CD4-positive, alpha-beta memory T cell (primary cell): ENCODE measurements at regions of chr2 and their contacts with region 1.

Region 1: DNA sequence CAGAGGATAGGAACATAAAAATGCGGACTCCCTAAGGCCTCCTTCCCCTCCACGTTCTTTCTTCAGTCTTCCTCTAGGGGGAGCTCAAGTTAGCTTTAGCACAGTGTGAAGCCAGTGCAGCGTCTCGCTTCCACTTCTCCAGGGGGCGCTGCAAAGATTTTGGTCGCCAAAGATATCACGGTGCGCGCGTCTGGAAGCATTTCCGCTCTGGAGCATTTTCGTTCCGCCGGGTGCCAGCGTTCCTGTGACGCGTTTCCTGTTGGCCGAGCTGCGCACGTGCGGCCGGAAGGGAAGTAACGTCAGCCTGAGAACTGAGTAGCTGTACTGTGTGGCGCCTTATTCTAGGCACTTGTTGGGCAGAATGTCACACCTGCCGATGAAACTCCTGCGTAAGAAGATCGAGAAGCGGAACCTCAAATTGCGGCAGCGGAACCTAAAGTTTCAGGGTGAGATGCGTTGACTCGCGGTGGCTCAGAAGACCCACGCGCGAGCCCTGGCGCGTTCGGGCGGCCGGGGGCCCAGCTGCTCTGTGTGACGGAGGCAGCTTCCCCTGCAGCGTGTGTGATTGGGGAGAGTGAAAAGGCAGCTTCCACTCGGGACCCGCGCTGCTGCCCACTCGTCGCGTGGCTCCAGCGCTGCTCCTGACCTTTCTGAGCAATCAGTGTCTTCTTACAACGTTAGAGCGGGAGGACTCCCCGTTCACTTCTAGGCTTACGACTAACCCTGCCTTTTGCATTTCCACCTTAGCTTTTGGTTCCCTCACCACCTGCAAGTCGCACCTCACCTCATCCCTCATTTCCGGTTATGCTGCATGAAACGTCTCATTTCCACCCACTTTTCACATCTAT is at the start of gene DDX18:
- DNase-seq: peak; percentile 98 to 99 (median 98)
- H3K4me3 ChIP-seq: peak within 1 kb of the TSS; percentile 77 to 91
- H3K4me3 Mint-ChIP-seq: peak within 1 kb of the TSS; percentile 86 to 99 (median 95)
- H3K27ac ChIP-seq: peak within 1 kb of the TSS; percentile 92
- H3K27ac Mint-ChIP-seq: peak within 1 kb of the TSS; percentile 95 to 100 (median 100)
- H3K4me1 ChIP-seq: peaks cover 35% of the 10 kb centered on the region
- H3K4me1 Mint-ChIP-seq: peaks cover 25 to 50% (median 38%) of the 10 kb centered on the region in 4 donors
- H3K27me3 ChIP-seq: no peaks in the 10 kb centered on the region
- H3K27me3 Mint-ChIP-seq: no peaks in the 10 kb centered on the region
- total RNA-seq, gene DDX18: 105 to 111 TPM

Region 2: DNA sequence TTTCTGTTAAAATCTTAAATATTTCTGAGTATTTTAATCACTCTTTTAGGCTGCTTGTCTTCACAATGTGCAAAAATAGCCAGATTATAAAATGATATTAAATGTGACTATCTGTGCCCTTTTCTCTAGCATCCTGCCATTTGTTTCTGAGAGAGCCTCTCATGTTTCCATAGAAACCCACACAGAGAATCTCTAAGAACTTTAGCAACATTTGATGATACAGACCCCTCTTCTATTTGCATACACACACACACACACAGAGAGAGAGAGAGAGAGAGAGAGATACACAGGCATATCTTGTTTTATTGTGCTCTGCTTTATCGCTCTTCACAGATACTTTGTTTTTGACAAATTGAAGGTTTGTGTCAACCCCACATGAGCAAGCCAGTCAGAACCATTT is 134.7 kb before region 1 on chr2:
- CTCF ChIA-PET with region 1: no interaction called
- POLR2A ChIA-PET with region 1: no interaction called
- intact Hi-C with region 1: no loop called
- DNase-seq: no peak
- H3K4me3 ChIP-seq: no peak overlapping the region
- H3K4me3 Mint-ChIP-seq: no peak overlapping the region
- H3K27ac ChIP-seq: no peak overlapping the region
- H3K27ac Mint-ChIP-seq: no peak overlapping the region
- H3K4me1 ChIP-seq: no peaks in the 10 kb centered on the region
- H3K4me1 Mint-ChIP-seq: no peaks in the 10 kb centered on the region
- H3K27me3 ChIP-seq: no peaks in the 10 kb centered on the region
- H3K27me3 Mint-ChIP-seq: peaks cover 2 to 7% of the 10 kb centered on the region in 2 donors

Region 3: DNA sequence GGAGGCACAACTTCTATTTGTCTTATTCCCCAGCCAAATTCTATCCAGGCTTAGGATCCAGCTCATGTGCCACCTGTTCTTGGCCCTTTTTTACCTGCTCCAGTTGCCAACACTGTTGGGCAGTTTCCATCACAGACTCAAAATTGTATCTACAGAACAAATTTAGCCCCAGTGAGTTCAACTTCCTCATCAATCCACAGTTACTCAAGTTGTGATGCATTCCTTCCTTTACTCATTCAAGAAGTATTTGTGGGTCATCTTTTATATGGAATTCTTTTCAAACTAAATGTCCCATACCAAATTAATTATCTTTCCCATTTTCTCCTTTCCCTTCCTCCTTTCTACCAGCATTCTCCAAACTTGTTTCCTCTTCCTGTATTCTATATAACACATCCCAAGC is 12.8 kb before region 1 on chr2:
- CTCF ChIA-PET with region 1: interaction called, 13 read pairs
- POLR2A ChIA-PET with region 1: interaction called, 12 read pairs
- intact Hi-C with region 1: no loop called
- DNase-seq: no peak
- H3K4me3 ChIP-seq: no peak overlapping the region
- H3K4me3 Mint-ChIP-seq: no peak overlapping the region
- H3K27ac ChIP-seq: no peak overlapping the region
- H3K27ac Mint-ChIP-seq: peak overlapping the region in 1 of 7 donors; percentile 56
- H3K4me1 ChIP-seq: no peaks in the 10 kb centered on the region
- H3K4me1 Mint-ChIP-seq: peaks cover 0 to 10% (median 2%) of the 10 kb centered on the region in 4 donors
- H3K27me3 ChIP-seq: no peaks in the 10 kb centered on the region
- H3K27me3 Mint-ChIP-seq: peaks cover 15 to 19% of the 10 kb centered on the region in 2 donors

Region 4: DNA sequence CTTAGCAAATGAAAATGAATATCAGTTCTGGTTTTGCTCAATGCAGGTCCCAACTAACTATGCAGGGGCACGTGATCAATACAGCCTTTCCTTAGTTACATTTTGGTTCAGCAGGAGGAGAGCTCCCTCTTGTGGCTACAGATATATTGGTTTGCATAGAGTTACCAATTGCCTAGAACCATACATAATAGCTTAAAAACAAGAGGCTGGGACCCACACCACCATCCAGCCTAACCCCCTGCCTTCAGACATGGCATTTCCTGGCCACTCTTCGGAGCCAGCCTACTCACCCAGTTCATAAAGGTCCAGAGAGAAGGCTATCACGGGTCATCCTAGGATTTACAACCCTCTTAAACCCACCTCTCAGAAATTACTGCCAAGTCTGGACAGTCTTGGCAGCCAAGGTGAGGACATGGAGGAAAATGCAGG is 188.8 kb after region 1 on chr2:
- CTCF ChIA-PET with region 1: interaction called, 44 read pairs
- POLR2A ChIA-PET with region 1: interaction called, 8 read pairs
- intact Hi-C with region 1: loop called (anchors 1 kb)
- DNase-seq: peak; percentile 63 to 73 (median 69)
- H3K4me3 ChIP-seq: no peak overlapping the region
- H3K4me3 Mint-ChIP-seq: peak overlapping the region in 1 of 8 donors; percentile 1
- H3K27ac ChIP-seq: no peak overlapping the region
- H3K27ac Mint-ChIP-seq: peak overlapping the region in 6 of 7 donors; percentile 5 to 85 (median 65)
- H3K4me1 ChIP-seq: no peaks in the 10 kb centered on the region
- H3K4me1 Mint-ChIP-seq: peaks cover 7 to 17% (median 14%) of the 10 kb centered on the region in 4 donors
- H3K27me3 ChIP-seq: no peaks in the 10 kb centered on the region
- H3K27me3 Mint-ChIP-seq: no peaks in the 10 kb centered on the region

Region 5: DNA sequence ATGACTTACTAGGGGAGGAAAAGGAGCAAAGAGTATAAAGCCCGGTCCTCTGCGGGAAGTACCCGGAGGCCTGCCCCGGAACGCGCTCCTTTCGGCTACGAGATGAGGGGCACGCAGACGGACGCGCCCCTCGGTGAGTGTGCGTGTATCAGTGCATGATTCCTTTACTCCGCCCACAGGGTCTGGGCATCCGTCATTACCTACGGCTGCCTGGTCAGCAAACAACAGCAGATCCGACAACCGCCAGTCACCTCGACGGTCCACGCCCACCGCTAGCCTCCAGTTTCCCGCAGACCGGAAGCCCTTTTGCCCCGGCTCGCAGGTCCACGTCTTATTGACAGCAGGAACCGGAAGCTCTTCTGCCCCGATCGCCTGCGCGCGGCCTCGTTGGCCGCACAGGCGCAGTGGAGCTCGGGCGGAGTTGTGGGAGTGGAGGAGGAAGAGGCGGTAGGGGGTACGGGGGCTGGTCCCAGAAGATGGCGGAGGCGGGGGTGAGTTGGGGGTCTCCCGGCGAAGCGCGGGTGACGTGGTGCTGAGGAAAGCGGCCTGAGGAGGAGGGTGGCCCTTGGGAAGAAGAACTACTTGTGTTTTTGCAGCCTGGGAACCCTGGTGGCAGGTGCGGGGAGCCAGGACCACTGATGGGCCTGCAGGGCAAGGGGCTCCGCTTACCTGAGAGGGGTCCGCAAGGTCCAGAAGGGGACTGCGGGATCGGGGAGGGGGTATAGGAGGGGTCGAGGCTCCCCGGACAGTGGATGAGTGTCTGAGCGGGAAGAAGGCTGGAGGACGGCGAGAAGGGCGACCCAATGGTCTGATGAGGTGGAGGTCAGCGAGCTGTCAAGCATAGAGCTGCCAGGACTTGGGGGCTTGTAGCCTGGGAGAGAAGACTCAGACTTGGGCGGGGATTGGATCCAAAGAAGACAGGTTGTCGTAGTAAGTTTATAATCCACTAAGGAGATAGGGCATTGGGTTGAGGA is 273.7 kb after region 1 on chr2 and contains the start of gene INSIG2:
- CTCF ChIA-PET with region 1: interaction called, 4 read pairs
- POLR2A ChIA-PET with region 1: interaction called, 5 read pairs
- intact Hi-C with region 1: loop called (anchors 1 kb)
- DNase-seq: peak; percentile 82 to 88 (median 83)
- H3K4me3 ChIP-seq: peak within 1 kb of the TSS; percentile 87 to 94
- H3K4me3 Mint-ChIP-seq: peak within 1 kb of the TSS; percentile 90 to 96 (median 93)
- H3K27ac ChIP-seq: peak within 1 kb of the TSS; percentile 66
- H3K27ac Mint-ChIP-seq: peak within 1 kb of the TSS; percentile 70 to 94 (median 94)
- H3K4me1 ChIP-seq: peaks cover 38% of the 10 kb centered on the region
- H3K4me1 Mint-ChIP-seq: peaks cover 14 to 23% (median 18%) of the 10 kb centered on the region in 4 donors
- H3K27me3 ChIP-seq: no peaks in the 10 kb centered on the region
- H3K27me3 Mint-ChIP-seq: peaks cover 0 to 3% of the 10 kb centered on the region in 2 donors
- total RNA-seq, gene INSIG2: 18.0 to 19.7 TPM

Region 6: GRCh38 chr2:118309946-118310680 is 495.5 kb after region 1 on chr2:
- CTCF ChIA-PET with region 1: interaction called, 3 read pairs
- POLR2A ChIA-PET with region 1: no interaction called
- intact Hi-C with region 1: loop called (anchors 5 kb)
- DNase-seq: peak; percentile 74 to 80 (median 77)
- H3K4me3 ChIP-seq: peak overlapping the region; percentile 63 to 81
- H3K4me3 Mint-ChIP-seq: peak overlapping the region; percentile 86 to 95 (median 92)
- H3K27ac ChIP-seq: peak overlapping the region; percentile 66
- H3K27ac Mint-ChIP-seq: peak overlapping the region; percentile 90 to 99 (median 97)
- H3K4me1 ChIP-seq: peaks cover 10% of the 10 kb centered on the region
- H3K4me1 Mint-ChIP-seq: peaks cover 1 to 13% (median 7%) of the 10 kb centered on the region in 4 donors
- H3K27me3 ChIP-seq: no peaks in the 10 kb centered on the region
- H3K27me3 Mint-ChIP-seq: peaks cover 0 to 2% of the 10 kb centered on the region in 2 donors

Region 7: GRCh38 chr2:119678998-119679710 is 1864.5 kb after region 1 on chr2 and contains the start of gene TMEM177:
- CTCF ChIA-PET with region 1: interaction called, 3 read pairs
- POLR2A ChIA-PET with region 1: interaction called, 5 read pairs
- intact Hi-C with region 1: loop called (anchors 2 kb)
- DNase-seq: peak; percentile 86 to 89 (median 88)
- H3K4me3 ChIP-seq: peak within 1 kb of the TSS; percentile 55 to 84
- H3K4me3 Mint-ChIP-seq: peak within 1 kb of the TSS; percentile 75 to 96 (median 94)
- H3K27ac ChIP-seq: peak within 1 kb of the TSS; percentile 75
- H3K27ac Mint-ChIP-seq: peak within 1 kb of the TSS; percentile 92 to 98 (median 97)
- H3K4me1 ChIP-seq: peaks cover 17% of the 10 kb centered on the region
- H3K4me1 Mint-ChIP-seq: peaks cover 21 to 49% (median 35%) of the 10 kb centered on the region in 4 donors
- H3K27me3 ChIP-seq: no peaks in the 10 kb centered on the region
- H3K27me3 Mint-ChIP-seq: peaks cover 0 to 6% of the 10 kb centered on the region in 2 donors
- total RNA-seq, gene TMEM177: 22.5 to 23.9 TPM